Mammary epithelial cell (primary cell): ENCODE measurements at regions of chr11 and their contacts with region 1.

Region 1: DNA sequence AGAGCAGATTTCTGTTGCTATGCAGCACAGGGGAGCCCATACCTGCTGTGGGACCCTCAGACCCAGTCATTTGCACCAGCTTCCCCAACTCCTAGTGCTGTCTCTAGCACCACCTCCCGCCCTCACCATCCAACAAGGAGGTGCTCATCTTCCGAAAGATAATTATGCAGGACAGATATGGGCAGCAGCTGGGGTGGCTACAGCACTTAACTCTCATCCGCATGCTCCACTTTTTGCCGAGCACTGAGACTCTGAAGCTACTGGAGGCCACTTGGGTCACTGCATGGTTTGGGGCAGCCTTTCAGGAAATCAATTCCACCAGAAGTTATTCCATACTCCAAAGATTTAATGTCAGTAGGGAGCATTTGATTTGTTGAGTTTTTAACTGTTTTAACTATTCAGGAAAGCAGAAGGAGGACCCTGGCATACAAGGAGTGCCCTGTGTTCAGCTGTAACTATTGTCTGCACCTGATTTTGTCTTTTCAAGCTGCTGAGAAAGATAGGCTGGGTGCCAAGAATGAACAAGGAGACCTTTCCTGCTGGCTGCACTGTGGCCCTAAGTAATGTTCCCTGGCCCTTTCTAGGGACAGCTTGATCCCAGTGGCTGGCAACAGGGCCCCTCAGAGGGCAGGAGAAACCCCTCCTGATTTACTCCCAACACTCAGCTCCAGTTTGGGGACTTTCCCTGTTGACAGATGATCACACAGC is 67.3 kb upstream of the CSNK2A3 start:
- DNase-seq: no peak
- H3K4me3 ChIP-seq: no peak overlapping the region
- H3K27ac ChIP-seq: no peak overlapping the region
- H3K4me1 ChIP-seq: peaks cover 46% of the 10 kb centered on the region
- H3K27me3 ChIP-seq: no peaks in the 10 kb centered on the region
- CTCF ChIP-seq: no peak

Region 2: GRCh38 chr11:11476971-11477645 is 56.8 kb after region 1 on chr11:
- CTCF ChIA-PET with region 1: interaction called, 11 read pairs
- dilution Hi-C with region 1: no loop called
- in situ Hi-C with region 1: no loop called
- intact Hi-C with region 1: no loop called
- DNase-seq: peak; percentile 55
- H3K4me3 ChIP-seq: no peak overlapping the region
- H3K27ac ChIP-seq: peak overlapping the region; percentile 59
- H3K4me1 ChIP-seq: peaks cover 29% of the 10 kb centered on the region
- H3K27me3 ChIP-seq: no peaks in the 10 kb centered on the region
- CTCF ChIP-seq: no peak